ENCODE measurements at regions of chr2 and their contacts with region 1.

Region 1: DNA sequence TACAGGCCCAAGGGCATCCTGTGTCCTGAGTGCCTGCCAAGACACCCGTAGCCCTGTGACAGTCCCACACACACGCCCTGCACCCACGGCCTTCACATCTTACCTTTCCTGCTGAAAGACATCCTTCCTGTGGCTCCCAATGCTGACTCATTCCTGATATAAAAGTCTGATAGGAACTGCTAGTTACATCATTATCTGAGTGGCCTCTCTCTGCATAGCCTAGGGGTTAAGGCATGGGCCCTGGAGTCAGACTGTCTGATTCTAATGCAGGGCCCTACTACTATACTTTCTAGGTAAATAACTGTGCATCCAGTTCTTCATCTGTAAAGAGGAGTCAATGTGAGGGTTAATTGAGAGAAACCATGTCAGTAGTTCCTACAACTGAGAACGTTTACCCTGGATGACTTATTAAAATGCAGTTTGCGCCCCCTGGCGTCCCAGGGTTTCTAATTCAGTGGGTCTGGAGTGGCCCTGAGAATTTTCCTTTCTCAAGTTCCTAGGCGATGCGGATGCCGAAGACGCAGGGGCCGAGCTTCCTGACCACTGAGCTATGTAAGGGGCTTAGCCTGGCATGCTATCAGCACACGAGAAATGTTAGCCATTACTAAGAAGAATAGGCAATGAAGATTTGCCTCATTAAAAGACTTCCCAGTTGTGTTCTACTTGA is 6.0 kb upstream of the GPR45 start:
- DNase-seq: peak; percentile 84
- H3K4me3 Mint-ChIP-seq: no peak overlapping the region
- H3K27ac Mint-ChIP-seq: no peak overlapping the region
- H3K4me1 Mint-ChIP-seq: peaks cover 9% of the 10 kb centered on the region
- H3K27me3 Mint-ChIP-seq: peaks cover 19% of the 10 kb centered on the region
- CTCF ChIP-seq: peak; percentile 61

Region 2: DNA sequence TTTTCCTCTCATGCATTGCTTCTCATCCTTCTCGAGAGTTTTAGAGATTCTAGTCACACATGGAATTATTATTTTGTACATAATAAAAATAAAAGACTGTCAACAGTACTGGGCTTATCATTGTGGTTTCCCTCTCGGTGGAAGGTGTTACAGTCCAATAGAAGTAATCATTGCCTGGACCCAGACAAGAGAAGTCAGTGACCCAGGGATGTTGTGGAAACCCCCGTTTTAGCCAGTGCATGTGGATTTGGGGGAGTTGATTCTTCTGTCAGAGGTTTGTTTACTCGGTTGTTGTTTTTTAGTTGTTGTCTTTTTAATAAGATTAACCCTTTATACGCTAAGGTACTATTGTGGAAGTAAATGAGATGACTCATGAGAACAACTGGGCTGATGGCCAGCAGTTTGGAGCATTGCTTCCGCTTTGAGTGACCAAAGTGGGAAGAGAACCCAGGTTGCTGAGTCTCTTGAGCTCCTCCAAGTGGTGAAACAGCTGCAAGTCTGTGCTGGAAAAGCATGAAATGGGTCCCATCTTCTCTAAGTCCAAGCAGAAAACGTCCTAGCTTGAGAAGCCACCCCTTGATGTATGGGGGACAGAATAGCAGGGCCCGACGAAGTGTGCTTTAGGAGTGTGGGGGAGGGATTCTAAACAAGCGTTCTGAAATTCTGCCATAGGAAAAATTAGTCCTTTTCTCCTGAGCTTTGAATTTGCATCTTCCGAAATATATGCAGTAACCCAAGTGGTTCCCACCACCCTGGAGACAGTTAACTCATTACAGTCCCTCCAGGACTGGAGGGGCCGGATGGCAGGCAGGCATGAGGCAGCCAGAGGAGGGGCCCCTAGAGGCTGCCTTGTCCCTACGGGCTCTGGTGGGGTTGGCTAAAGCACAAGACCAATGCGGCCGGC is 55.8 kb before region 1 on chr2:
- CTCF ChIA-PET with region 1: interaction called, 3 read pairs
- intact Hi-C with region 1: loop called (anchors 5 kb)
- DNase-seq: peak; percentile 69
- H3K4me3 Mint-ChIP-seq: no peak overlapping the region
- H3K27ac Mint-ChIP-seq: no peak overlapping the region
- H3K4me1 Mint-ChIP-seq: no peaks in the 10 kb centered on the region
- H3K27me3 Mint-ChIP-seq: peaks cover 52% of the 10 kb centered on the region
- CTCF ChIP-seq: peak; percentile 34